ENCODE measurements at regions of chr20 and their contacts with region 1.

Region 1: GRCh38 chr20:2093159-2093781 is 8.4 kb upstream of the STK35 start:
- DNase-seq: peak; percentile 65
- ATAC-seq: peak; percentile 69
- H3K4me3 Mint-ChIP-seq: no peak overlapping the region
- H3K27ac Mint-ChIP-seq: no peak overlapping the region
- H3K4me1 Mint-ChIP-seq: no peaks in the 10 kb centered on the region
- H3K27me3 Mint-ChIP-seq: peaks cover 24% of the 10 kb centered on the region

Region 2: DNA sequence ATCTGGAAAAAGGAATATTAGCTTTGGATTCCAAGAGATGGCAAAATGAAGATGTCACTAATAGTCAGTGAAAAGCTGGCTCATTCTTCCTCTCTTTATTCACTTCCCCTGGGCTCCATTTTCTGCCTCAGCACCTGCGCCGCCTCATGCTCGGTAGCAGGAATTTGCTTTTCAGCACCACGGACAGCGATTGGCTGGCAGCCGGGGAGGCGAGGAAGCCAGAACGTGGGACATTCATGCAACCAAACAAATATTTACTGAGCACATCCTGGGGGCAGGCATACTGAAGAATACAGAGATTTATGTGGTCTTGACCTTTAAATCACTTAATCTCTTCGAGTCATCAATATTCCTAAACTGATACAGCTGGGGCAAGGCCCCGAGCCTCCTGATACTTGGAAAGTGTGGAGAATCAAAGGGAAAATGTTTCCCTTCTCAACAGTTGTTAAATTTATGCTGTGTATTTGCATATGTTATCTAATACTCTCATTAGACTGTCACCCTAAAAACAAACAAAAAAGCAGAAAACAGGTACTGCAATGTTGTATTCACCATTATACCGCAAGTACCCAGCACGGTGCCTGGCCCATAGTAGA is 87.3 kb before region 1 on chr20:
- CTCF ChIA-PET with region 1: interaction called, 4 read pairs
- POLR2A ChIA-PET with region 1: no interaction called
- intact Hi-C with region 1: loop called in 1 of 2 experiments (anchors 1 kb)
- DNase-seq: peak; percentile 83
- ATAC-seq: no peak
- H3K4me3 Mint-ChIP-seq: no peak overlapping the region
- H3K27ac Mint-ChIP-seq: no peak overlapping the region
- H3K4me1 Mint-ChIP-seq: no peaks in the 10 kb centered on the region
- H3K27me3 Mint-ChIP-seq: peaks cover 20% of the 10 kb centered on the region

Measured in activated CD4-positive, alpha-beta T cell treated with anti-CD3 and anti-CD28 coated beads for 36 hours (primary cell).